ENCODE measurements at regions of chr11 and their contacts with region 1.

Region 1: DNA sequence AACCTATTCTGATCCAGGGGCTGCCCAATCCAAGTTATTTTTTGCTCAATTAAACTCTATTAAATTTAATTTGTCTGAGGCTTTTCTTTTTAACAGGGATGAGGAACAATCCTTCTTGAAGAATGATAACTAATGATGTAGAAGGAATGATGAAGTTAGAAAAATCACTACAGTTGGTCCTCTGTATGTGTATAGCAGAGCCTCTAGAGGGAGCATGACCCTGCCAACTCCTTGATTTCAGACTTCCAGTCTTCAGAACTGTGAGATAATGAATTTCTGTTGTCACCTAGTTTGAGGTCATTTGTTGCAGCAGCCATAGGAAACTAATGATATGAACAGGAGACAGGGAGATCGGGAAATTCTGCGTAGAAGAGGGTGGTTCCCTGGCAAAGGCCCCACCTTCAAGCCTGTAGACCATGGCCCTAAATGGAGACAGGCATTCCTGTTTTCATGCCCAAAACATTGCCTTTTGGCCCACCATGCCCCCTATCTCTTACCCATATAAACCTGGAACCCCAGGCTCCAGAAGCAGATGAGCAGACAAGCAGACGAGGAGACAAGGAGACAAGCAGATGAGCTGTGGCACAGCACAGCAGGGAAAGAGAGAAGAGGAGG is 7.7 kb upstream of the QSER1 start:
- DNase-seq: no peak
- ATAC-seq: peak; percentile 46 to 68 (median 62)
- H3K4me3 ChIP-seq: no peak overlapping the region
- H3K27ac ChIP-seq: peak overlapping the region in 2 of 3 donors; percentile 43 to 58
- H3K4me1 ChIP-seq: peaks cover 0 to 16% (median 0%) of the 10 kb centered on the region in 4 donors
- H3K27me3 ChIP-seq: no peaks in the 10 kb centered on the region
- CTCF ChIP-seq: peak in 3 of 4 donors; percentile 42 to 52 (median 45)
- POLR2A ChIP-seq: no peak

Region 2: GRCh38 chr11:32829680-32830412 is 55.0 kb before region 1 on chr11 and contains the start of gene PRRG4:
- intact Hi-C with region 1: loop called in 1 of 2 experiments (anchors 10 kb)
- DNase-seq: peak; percentile 82 to 90 (median 89)
- ATAC-seq: peak; percentile 82 to 96 (median 90)
- H3K4me3 ChIP-seq: peak within 1 kb of the TSS; percentile 73 to 82 (median 77)
- H3K27ac ChIP-seq: peak within 1 kb of the TSS; percentile 93 to 99 (median 95)
- H3K4me1 ChIP-seq: peaks cover 0 to 11% (median 0%) of the 10 kb centered on the region in 4 donors
- H3K27me3 ChIP-seq: no peaks in the 10 kb centered on the region
- CTCF ChIP-seq: no peak
- POLR2A ChIP-seq: peak; percentile 63
- total RNA-seq, gene PRRG4: 4.7 to 13.6 (median 9.5) TPM

Region 3: GRCh38 chr11:33027846-33028536 is 143.1 kb after region 1 on chr11:
- intact Hi-C with region 1: no loop called
- DNase-seq: no peak
- ATAC-seq: no peak
- H3K4me3 ChIP-seq: no peak overlapping the region
- H3K27ac ChIP-seq: no peak overlapping the region
- H3K4me1 ChIP-seq: peaks cover 0 to 9% (median 4%) of the 10 kb centered on the region in 4 donors
- H3K27me3 ChIP-seq: no peaks in the 10 kb centered on the region
- CTCF ChIP-seq: no peak
- POLR2A ChIP-seq: no peak

Measured in right lobe of liver (tissue), 6 donors.